ENCODE measurements at regions of chr11 and their contacts with region 1.

Region 1: DNA sequence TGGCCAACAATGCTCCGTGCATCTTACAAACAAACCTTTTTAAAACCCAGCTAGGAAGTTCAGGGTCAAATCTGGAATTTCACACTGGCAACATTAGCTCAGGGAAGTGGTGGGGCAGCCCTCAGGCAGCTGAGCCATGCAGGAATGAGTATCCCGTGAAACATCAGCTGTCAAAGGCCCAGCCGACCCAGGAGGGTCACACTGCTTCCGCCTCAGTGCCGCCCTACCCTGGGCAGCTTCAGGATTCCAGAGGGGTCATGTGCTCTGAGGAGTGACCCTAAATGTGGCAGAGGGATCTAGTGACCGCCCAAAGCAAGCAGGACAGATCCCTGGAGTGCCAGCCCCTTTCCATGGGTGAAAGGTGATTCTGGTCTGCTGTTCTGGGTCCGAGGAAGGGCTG is 73.4 kb downstream of the LINC01488 start:
- DNase-seq: no peak
- H3K4me3 ChIP-seq: no peak overlapping the region
- H3K27ac ChIP-seq: no peak overlapping the region
- H3K4me1 ChIP-seq: no peaks in the 10 kb centered on the region
- H3K27me3 ChIP-seq: no peaks in the 10 kb centered on the region
- CTCF ChIP-seq: no peak
- EP300 ChIP-seq: no peak
- POLR2A ChIP-seq: no peak

Region 2: GRCh38 chr11:69497221-69497787 is 57.6 kb before region 1 on chr11:
- intact Hi-C with region 1: loop called in 1 of 4 experiments (anchors 10 kb)
- DNase-seq: peak in 4 of 5 donors; percentile 12 to 76 (median 42)
- H3K4me3 ChIP-seq: no peak overlapping the region
- H3K27ac ChIP-seq: no peak overlapping the region
- H3K4me1 ChIP-seq: peaks cover 3% of the 10 kb centered on the region
- H3K27me3 ChIP-seq: no peaks in the 10 kb centered on the region
- CTCF ChIP-seq: no peak
- EP300 ChIP-seq: no peak
- POLR2A ChIP-seq: no peak

Region 3: GRCh38 chr11:69510471-69511357 is 44.2 kb before region 1 on chr11:
- intact Hi-C with region 1: no loop called
- DNase-seq: no peak
- H3K4me3 ChIP-seq: no peak overlapping the region
- H3K27ac ChIP-seq: no peak overlapping the region
- H3K4me1 ChIP-seq: no peaks in the 10 kb centered on the region
- H3K27me3 ChIP-seq: no peaks in the 10 kb centered on the region
- CTCF ChIP-seq: no peak
- EP300 ChIP-seq: no peak
- POLR2A ChIP-seq: no peak

Region 4: GRCh38 chr11:69588270-69588669 is 33.4 kb after region 1 on chr11:
- intact Hi-C with region 1: no loop called
- DNase-seq: no peak
- H3K4me3 ChIP-seq: no peak overlapping the region
- H3K27ac ChIP-seq: no peak overlapping the region
- H3K4me1 ChIP-seq: no peaks in the 10 kb centered on the region
- H3K27me3 ChIP-seq: no peaks in the 10 kb centered on the region
- CTCF ChIP-seq: no peak
- EP300 ChIP-seq: no peak
- POLR2A ChIP-seq: no peak

Region 5: DNA sequence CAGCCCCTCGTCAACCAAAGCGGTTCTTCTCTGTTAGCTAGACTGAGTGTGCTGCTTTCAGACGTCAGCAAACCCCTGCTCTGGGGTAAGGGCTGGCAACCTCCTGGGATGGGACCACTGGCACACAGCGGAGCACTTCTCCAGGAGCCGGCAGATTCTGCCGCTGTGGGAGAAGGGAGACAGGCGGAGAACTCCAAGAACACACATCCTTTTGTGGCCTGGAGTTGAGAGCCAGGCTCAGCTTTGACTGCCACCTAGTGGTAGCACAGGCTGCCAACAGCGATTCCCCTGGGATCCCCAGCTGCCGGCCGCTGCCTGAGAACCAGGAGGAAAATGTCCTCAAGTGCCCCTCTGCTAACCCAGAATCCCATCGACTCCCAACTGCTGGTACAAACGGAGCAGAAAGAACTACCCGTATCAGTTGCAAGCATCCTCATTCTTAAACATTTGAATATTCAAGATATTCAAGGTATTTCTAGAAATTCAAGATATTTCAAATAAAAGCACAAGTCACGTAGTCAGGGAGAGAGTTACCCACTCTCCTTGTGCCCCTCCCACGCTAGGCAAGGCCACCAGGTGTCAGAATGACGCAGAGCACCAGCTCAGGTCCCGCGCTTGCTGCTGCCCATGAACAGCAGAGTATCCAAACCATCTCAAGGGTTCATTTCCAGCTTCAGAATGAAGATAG is 115.4 kb after region 1 on chr11:
- intact Hi-C with region 1: no loop called
- DNase-seq: peak; percentile 73 to 91 (median 86)
- H3K4me3 ChIP-seq: no peak overlapping the region
- H3K27ac ChIP-seq: no peak overlapping the region
- H3K4me1 ChIP-seq: peaks cover 10% of the 10 kb centered on the region
- H3K27me3 ChIP-seq: no peaks in the 10 kb centered on the region
- CTCF ChIP-seq: peak; percentile 70 to 80 (median 71)
- EP300 ChIP-seq: no peak
- POLR2A ChIP-seq: no peak

Measured in ovary (tissue), 10 donors.